RWPE1 (cell line): ENCODE measurements at regions of chr10 and their contacts with region 1.

Region 1: GRCh38 chr10:112570585-112570984 is 123.6 kb downstream of the VTI1A start:
- DNase-seq: no peak
- H3K27ac ChIP-seq: no peak overlapping the region
- CTCF ChIP-seq: no peak

Region 2: GRCh38 chr10:112558476-112559142 is 12.0 kb before region 1 on chr10:
- CTCF ChIA-PET with region 1: no interaction called
- POLR2A ChIA-PET with region 1: no interaction called
- DNase-seq: no peak
- H3K27ac ChIP-seq: no peak overlapping the region
- CTCF ChIP-seq: no peak

Region 3: DNA sequence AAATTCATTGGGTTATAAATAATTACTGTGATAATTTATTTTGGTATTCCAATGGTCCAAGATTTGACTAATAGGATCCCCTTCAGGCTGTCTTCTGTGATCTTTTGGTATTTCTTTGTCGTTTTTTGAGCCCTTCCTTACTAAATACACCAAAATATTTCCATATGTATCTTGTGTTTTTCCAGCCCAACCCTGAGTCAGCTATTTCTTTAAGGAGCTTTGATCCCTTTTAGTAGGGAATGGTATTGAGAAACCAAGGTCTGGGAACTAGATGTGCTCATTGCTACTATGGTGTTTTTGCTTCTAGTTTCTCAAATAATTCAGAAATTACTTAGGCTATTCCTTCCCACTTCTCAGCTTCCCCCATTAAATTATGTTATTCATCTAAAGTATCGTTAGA is 1299.2 kb after region 1 on chr10:
- CTCF ChIA-PET with region 1: interaction called, 11 read pairs
- POLR2A ChIA-PET with region 1: no interaction called
- DNase-seq: no peak
- H3K27ac ChIP-seq: no peak overlapping the region
- CTCF ChIP-seq: no peak